Right cardiac atrium (tissue), 5 donors: ENCODE measurements at regions of chr11 and their contacts with region 1.

Region 1: DNA sequence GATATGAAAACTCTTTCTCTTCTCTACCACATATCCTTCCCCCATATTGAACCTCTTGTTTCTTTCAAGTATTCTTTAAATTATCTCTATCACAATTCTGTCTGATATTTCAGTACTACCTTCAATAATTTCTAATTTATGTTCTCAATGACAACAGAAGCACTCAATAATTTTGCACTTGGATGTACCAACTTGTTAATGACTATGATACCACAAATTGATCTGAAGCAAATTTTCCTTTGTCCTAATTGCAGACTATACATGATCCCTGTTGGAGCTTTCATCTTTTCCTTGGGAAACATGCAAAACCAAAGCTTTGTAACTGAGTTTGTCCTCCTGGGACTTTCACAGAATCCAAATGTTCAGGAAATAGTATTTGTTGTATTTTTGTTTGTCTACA is at the start of gene OR4C15:
- DNase-seq: no peak
- ATAC-seq: no peak
- H3K4me3 ChIP-seq: no peak within 1 kb of the TSS
- H3K27ac ChIP-seq: no peak within 1 kb of the TSS
- H3K4me1 ChIP-seq: no peaks in the 10 kb centered on the region
- H3K27me3 ChIP-seq: no peaks in the 10 kb centered on the region
- total RNA-seq, gene OR4C15: not detected

Region 2: DNA sequence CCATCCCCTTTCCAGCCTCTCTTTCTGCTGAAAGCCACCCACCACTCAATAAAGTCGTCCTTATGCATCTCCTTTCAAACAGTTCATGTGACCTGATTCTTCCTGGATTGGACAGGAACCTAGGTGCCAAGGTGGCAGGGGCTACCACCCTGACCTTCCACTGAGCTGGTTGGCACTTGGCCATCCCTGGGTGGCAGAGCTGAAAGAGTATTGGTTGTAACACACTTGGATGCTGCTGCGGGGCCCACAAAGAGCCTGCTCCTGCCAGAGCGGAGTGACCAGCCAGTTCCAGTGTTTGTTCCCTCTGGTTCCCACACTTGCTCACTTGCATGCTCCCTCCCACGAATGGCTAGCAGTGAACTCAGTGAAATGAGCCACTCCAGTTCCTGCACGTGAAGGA is 57.1 kb before region 1 on chr11:
- intact Hi-C with region 1: loop called in 1 of 4 experiments (anchors 10 kb)
- DNase-seq: no peak
- ATAC-seq: no peak
- H3K4me3 ChIP-seq: no peak overlapping the region
- H3K27ac ChIP-seq: no peak overlapping the region
- H3K4me1 ChIP-seq: no peaks in the 10 kb centered on the region
- H3K27me3 ChIP-seq: no peaks in the 10 kb centered on the region